Panc1 (cell line): ENCODE measurements at regions of chr18 and their contacts with region 1.

Region 1: DNA sequence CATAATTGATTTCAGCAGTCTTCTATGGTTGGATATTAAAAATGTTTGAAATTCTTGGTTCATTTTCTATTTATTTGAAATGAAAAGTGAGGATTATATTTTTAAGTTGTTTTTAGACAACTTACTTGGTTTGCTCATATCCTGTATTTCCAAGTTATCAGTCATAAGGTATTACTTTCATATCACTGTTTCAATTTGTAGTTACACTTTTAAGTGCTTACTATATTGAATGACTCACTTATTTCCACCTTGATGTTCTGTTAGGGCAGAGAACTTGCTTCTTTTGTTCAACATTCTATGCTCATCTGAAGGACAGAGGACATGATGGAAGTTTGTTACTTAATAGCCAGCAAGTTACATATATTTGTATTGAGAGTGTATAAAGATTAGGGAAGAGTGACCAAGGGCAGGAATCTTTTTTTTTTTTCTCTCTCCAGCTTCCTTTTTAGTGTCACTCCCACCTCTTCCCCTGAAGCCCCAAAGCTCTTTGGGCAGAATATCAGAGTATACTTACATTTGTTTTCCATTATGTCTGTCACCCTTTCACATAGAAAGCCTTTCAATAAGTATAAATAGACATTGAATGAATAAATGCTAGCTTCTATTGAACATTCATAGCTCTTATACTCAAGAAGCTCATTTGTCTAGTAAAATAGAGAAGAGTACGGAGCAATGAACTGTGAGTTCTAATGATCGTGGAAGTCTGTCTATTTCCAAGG is 28.1 kb downstream of the PIK3C3 start:
- DNase-seq: no peak
- ATAC-seq: no peak
- H3K4me3 ChIP-seq: no peak overlapping the region
- H3K27ac ChIP-seq: no peak overlapping the region
- H3K4me1 ChIP-seq: no peaks in the 10 kb centered on the region
- H3K27me3 ChIP-seq: no peaks in the 10 kb centered on the region
- CTCF ChIP-seq: no peak

Region 2: GRCh38 chr18:42222557-42222956 is 239.5 kb after region 1 on chr18:
- CTCF ChIA-PET with region 1: no interaction called
- POLR2A ChIA-PET with region 1: no interaction called
- in situ Hi-C with region 1: no loop called
- intact Hi-C with region 1: no loop called
- DNase-seq: no peak
- ATAC-seq: no peak
- H3K4me3 ChIP-seq: no peak overlapping the region
- H3K27ac ChIP-seq: no peak overlapping the region
- H3K4me1 ChIP-seq: no peaks in the 10 kb centered on the region
- H3K27me3 ChIP-seq: no peaks in the 10 kb centered on the region
- CTCF ChIP-seq: no peak

Region 3: DNA sequence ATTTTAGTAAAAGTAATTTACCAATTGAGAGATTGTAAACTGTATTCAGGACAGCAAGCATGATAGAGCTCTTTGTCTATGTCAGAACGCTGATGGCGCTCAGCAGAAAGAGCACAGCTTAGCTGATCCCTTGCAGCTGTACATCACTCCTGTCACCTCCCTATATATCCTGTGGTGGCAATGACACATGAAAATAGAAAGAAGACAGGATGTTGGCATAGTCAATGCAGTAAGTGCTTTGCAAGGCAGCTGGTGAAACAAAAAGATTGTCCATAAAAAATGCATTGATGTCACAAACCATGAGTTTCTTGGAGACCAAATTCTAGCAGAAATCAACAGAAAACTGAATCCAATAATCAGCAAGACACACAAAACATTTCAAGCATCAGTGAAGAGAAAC is 910.9 kb after region 1 on chr18:
- CTCF ChIA-PET with region 1: no interaction called
- POLR2A ChIA-PET with region 1: interaction called, 11 read pairs
- in situ Hi-C with region 1: no loop called
- intact Hi-C with region 1: no loop called
- DNase-seq: no peak
- ATAC-seq: no peak
- H3K4me3 ChIP-seq: no peak overlapping the region
- H3K27ac ChIP-seq: no peak overlapping the region
- H3K4me1 ChIP-seq: no peaks in the 10 kb centered on the region
- H3K27me3 ChIP-seq: no peaks in the 10 kb centered on the region
- CTCF ChIP-seq: no peak